ENCODE measurements at regions of chr20 and their contacts with region 1.

Region 1: DNA sequence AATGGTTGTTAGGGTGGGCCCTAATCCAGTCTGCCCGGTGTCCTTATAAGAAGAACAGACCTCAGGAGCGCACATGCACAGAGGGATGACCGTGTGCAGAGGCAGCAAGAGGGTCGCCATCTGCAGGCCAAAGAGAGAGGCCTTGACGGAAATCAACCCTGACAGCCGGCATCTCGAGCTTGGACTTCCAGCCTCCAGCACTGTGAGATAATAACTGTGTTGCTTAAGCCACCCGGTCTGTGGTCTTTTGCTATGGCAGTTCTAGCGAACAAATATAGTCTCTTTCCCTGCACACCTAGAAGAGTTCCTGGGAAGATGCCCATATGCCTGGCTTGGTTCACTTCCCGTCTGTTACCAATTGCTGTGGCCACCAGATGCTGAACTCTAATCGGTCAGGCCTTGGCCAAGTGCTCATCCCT is 35.3 kb upstream of the PTGIS start:
- DNase-seq: peak; percentile 47
- ATAC-seq: peak; percentile 87
- H3K4me3 Mint-ChIP-seq: no peak overlapping the region
- H3K27ac Mint-ChIP-seq: no peak overlapping the region
- H3K4me1 Mint-ChIP-seq: no peaks in the 10 kb centered on the region
- H3K27me3 Mint-ChIP-seq: no peaks in the 10 kb centered on the region
- CTCF ChIP-seq: no peak

Region 2: GRCh38 chr20:49583669-49584417 is 19.4 kb before region 1 on chr20:
- CTCF ChIA-PET with region 1: interaction called, 13 read pairs
- POLR2A ChIA-PET with region 1: no interaction called
- DNase-seq: no peak
- ATAC-seq: no peak
- H3K4me3 Mint-ChIP-seq: no peak overlapping the region
- H3K27ac Mint-ChIP-seq: no peak overlapping the region
- H3K4me1 Mint-ChIP-seq: peaks cover 14% of the 10 kb centered on the region
- H3K27me3 Mint-ChIP-seq: no peaks in the 10 kb centered on the region
- CTCF ChIP-seq: no peak